Heart right ventricle (tissue), 16 donors: ENCODE measurements at regions of chr3 and their contacts with region 1.

Region 1: DNA sequence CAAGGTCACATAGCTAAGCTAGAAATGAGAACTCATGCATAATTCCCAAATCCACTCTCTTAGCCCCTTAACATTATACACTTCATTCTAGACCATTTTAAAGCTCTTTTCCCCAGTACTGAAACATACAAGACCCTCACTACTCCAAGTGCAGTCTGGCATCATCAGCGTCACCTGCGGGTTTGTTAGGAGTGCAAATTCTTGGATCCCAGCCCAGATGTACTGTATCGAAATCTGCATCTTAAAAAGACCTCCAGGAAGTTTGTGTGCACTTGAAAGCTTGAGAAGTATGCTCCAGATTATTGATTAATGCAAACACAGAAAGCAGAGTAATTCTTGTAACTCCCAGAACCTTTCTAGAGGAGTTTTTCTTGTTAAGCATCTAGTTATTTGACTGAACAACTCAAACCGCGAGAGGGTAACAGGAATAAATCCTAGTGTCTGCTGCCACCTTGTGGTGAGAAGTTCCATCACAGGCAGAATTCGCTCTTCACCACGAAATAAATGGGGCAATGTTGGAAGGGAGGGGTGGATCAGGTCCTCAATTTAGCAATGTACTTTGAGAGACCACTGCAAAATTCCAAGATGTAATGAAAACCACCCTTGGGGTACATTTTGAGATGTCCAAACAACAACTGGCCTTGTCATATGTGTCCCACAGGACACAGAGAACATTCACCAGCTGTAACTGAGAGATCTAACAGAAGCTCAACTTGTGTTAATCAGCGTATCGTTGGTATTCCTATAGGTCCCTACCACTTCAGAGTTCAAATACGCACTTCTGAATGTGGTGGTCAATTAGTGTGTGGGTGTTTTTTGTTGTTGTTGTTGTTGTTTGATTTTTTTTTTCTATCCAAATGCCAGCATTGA is 583 bp upstream of the C3orf49 start:
- DNase-seq: peak in 1 of 2 donors; percentile 55
- ATAC-seq: peak in 3 of 8 donors; percentile 67 to 70 (median 67)
- H3K4me3 ChIP-seq: no peak overlapping the region
- H3K27ac ChIP-seq: no peak overlapping the region
- H3K4me1 ChIP-seq: peaks cover 0 to 4% (median 0%) of the 10 kb centered on the region in 9 donors
- H3K27me3 ChIP-seq: no peaks in the 10 kb centered on the region
- CTCF ChIP-seq: peak; percentile 78 to 93 (median 90)

Region 2: GRCh38 chr3:63349583-63350521 is 468.7 kb before region 1 on chr3:
- intact Hi-C with region 1: loop called (anchors 1 to 5 kb)
- DNase-seq: peak in 1 of 2 donors; percentile 14
- ATAC-seq: peak in 1 of 8 donors; percentile 49
- H3K4me3 ChIP-seq: no peak overlapping the region
- H3K27ac ChIP-seq: no peak overlapping the region
- H3K4me1 ChIP-seq: peaks cover 0 to 3% (median 0%) of the 10 kb centered on the region in 9 donors
- H3K27me3 ChIP-seq: peaks cover 0 to 45% (median 22%) of the 10 kb centered on the region in 7 donors
- CTCF ChIP-seq: peak; percentile 34 to 80 (median 72)

Region 3: DNA sequence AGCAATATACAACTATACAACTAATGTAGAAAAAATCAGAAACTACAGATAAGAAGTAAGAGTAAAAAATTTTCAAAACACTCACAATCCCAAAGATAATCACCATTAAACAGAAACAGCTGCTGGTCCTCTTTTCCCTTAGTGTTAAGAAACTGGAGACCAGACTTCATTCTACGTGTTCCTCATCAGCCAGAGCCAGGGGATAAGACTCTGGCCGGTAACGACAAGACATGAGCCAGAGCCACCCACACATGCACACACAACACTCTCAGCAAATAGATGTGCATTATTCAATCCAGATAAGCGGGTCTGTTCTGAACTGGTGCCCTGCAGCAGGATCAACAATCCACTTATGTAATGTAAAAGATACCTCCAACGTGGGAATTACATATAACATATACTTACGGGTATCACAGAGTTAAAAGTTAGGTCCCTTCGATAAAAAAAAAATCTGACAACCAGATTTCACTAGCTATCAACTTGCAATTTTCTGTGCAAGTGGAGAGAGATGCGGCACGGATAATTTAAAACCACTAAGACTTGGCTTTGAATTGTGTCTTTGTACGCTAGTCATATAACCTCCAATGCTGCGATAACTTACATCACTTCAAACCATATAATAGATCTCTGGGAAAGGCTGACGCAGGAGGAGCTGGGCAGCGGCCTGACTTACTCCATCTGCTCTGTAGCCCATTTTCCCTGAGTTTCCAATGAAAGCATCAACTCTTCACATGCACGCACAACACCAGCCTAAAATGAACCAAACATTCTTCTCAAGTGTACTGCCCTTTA is 389.0 kb after region 1 on chr3:
- intact Hi-C with region 1: no loop called
- DNase-seq: peak in 1 of 2 donors; percentile 65
- ATAC-seq: peak; percentile 66 to 82 (median 78)
- H3K4me3 ChIP-seq: no peak overlapping the region
- H3K27ac ChIP-seq: peak overlapping the region in 6 of 10 donors; percentile 45 to 74 (median 67)
- H3K4me1 ChIP-seq: peaks cover 13 to 72% (median 32%) of the 10 kb centered on the region in 9 donors
- H3K27me3 ChIP-seq: no peaks in the 10 kb centered on the region
- CTCF ChIP-seq: no peak